IMR-90 (cell line): ENCODE measurements at regions of chr9 and their contacts with region 1.

Region 1: DNA sequence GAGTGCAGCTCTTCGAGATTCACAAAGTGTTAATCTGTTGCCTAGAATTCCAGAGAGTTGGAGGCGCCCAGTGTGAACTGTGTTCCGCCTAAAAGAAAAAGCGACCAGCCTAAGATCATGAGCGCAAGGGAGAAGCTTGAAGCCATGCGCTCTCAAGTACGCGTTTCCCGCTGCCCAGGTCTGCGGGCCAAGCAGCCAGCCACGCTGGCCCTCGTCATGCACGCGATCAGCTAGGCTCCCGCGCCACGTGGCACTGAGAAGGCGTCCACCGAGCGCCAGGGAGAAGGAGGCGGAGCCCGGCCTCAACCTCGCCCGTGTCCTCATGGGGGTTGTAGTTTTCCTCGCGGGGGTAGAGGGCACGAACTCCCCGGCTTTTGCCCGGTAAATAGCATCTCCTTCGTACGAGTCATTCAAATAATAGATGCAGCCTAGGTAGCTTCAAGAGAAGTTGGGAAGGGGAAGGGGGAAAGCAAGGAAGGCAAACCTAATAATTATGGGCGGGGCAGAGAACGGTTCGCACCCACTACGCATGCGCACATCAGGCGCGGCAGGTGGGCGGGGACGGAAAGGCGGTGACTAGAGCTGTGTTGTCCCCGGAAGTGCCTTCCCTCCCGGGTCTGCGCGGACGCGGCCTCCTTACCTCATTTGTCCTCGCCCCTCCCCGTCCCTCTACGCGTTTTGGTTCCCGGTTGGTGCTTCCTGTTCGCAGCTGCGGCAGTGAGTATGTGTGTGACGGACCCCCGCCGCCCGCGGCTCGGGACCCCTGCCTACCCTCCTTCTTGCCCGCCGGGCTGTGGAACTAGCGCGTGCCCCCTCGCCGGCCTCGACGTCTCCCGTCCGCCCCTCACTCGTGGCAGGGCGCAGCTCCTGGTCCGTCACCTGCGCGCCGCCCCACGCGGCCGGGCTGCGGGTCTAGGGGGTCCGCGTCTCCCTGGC is at the start of gene ZCCHC7:
- DNase-seq: peak; percentile 93
- ATAC-seq: peak; percentile 98
- H3K4me3 ChIP-seq: peak within 1 kb of the TSS; percentile 79
- H3K27ac ChIP-seq: peak within 1 kb of the TSS; percentile 91
- H3K4me1 ChIP-seq: no peaks in the 10 kb centered on the region; the same call in 1 of the 2 replicates
- H3K27me3 ChIP-seq: no peaks in the 10 kb centered on the region
- CTCF ChIP-seq: no peak
- POLR2A ChIP-seq: peak; percentile 86
- RAD21 ChIP-seq: no peak
- total RNA-seq, gene ZCCHC7: 21.4 and 28.7 TPM in 2 replicates

Region 2: GRCh38 chr9:37036776-37037502 is 83.2 kb before region 1 on chr9:
- CTCF ChIA-PET with region 1: no interaction called
- POLR2A ChIA-PET with region 1: no interaction called
- dilution Hi-C with region 1: no loop called
- in situ Hi-C with region 1: no loop called
- intact Hi-C with region 1: loop called (anchors 5 kb)
- DNase-seq: peak; percentile 12
- ATAC-seq: peak; percentile 70
- H3K4me3 ChIP-seq: peak overlapping the region; percentile 35
- H3K27ac ChIP-seq: no peak overlapping the region
- H3K4me1 ChIP-seq: no peaks in the 10 kb centered on the region; the same call in 1 of the 2 replicates
- H3K27me3 ChIP-seq: peaks cover 93% of the 10 kb centered on the region
- CTCF ChIP-seq: no peak
- POLR2A ChIP-seq: no peak
- RAD21 ChIP-seq: no peak

Region 3: GRCh38 chr9:37079370-37080164 is 40.6 kb before region 1 on chr9:
- CTCF ChIA-PET with region 1: no interaction called
- POLR2A ChIA-PET with region 1: no interaction called
- dilution Hi-C with region 1: no loop called
- in situ Hi-C with region 1: no loop called
- intact Hi-C with region 1: loop called (anchors 5 kb)
- DNase-seq: peak; percentile 91
- ATAC-seq: peak; percentile 97
- H3K4me3 ChIP-seq: peak overlapping the region; percentile 86
- H3K27ac ChIP-seq: peak overlapping the region; percentile 80
- H3K4me1 ChIP-seq: no peaks in the 10 kb centered on the region; the same call in 1 of the 2 replicates
- H3K27me3 ChIP-seq: no peaks in the 10 kb centered on the region
- CTCF ChIP-seq: no peak
- POLR2A ChIP-seq: peak; percentile 66; the same call in 1 of the 2 replicates
- RAD21 ChIP-seq: no peak

Region 4: GRCh38 chr9:37243588-37244345 is 123.6 kb after region 1 on chr9:
- CTCF ChIA-PET with region 1: no interaction called
- POLR2A ChIA-PET with region 1: no interaction called
- dilution Hi-C with region 1: no loop called
- in situ Hi-C with region 1: no loop called
- intact Hi-C with region 1: loop called (anchors 10 kb)
- DNase-seq: no peak
- ATAC-seq: no peak
- H3K4me3 ChIP-seq: no peak overlapping the region
- H3K27ac ChIP-seq: no peak overlapping the region
- H3K4me1 ChIP-seq: 0 out of 2 replicates have a peak, but pooled peaks cover 2% of the 10 kb centered on the region
- H3K27me3 ChIP-seq: no peaks in the 10 kb centered on the region
- CTCF ChIP-seq: no peak
- POLR2A ChIP-seq: no peak
- RAD21 ChIP-seq: no peak

Region 5: GRCh38 chr9:37390759-37391158 is 270.6 kb after region 1 on chr9:
- CTCF ChIA-PET with region 1: no interaction called
- POLR2A ChIA-PET with region 1: no interaction called
- dilution Hi-C with region 1: no loop called
- in situ Hi-C with region 1: no loop called
- intact Hi-C with region 1: no loop called
- DNase-seq: no peak
- ATAC-seq: no peak
- H3K4me3 ChIP-seq: no peak overlapping the region
- H3K27ac ChIP-seq: no peak overlapping the region
- H3K4me1 ChIP-seq: no peaks in the 10 kb centered on the region
- H3K27me3 ChIP-seq: peaks cover 12% of the 10 kb centered on the region; the same call in 1 of the 2 replicates
- CTCF ChIP-seq: peak; percentile 26; the same call in 1 of the 2 replicates
- POLR2A ChIP-seq: no peak
- RAD21 ChIP-seq: peak; percentile 16; the same call in 1 of the 2 replicates